Activated B cell treated with CpG ODN at 0.5 μM for 24 hours (primary cell): ENCODE measurements at regions of chr19 and their contacts with region 1.

Region 1: GRCh38 chr19:5292822-5293611 is 47.6 kb downstream of the PTPRS start:
- DNase-seq: peak; percentile 43
- ATAC-seq: peak; percentile 75
- H3K4me3 Mint-ChIP-seq: peak overlapping the region; percentile 75
- H3K27ac Mint-ChIP-seq: no peak overlapping the region
- H3K4me1 Mint-ChIP-seq: peaks cover 22% of the 10 kb centered on the region
- H3K27me3 Mint-ChIP-seq: peaks cover 18% of the 10 kb centered on the region
- CTCF ChIP-seq: no peak

Region 2: GRCh38 chr19:4976401-4977298 is 316.4 kb before region 1 on chr19:
- CTCF ChIA-PET with region 1: no interaction called
- POLR2A ChIA-PET with region 1: no interaction called
- intact Hi-C with region 1: no loop called
- DNase-seq: no peak
- ATAC-seq: peak; percentile 22
- H3K4me3 Mint-ChIP-seq: peak overlapping the region; percentile 57
- H3K27ac Mint-ChIP-seq: peak overlapping the region; percentile 41
- H3K4me1 Mint-ChIP-seq: peaks cover 60% of the 10 kb centered on the region
- H3K27me3 Mint-ChIP-seq: no peaks in the 10 kb centered on the region
- CTCF ChIP-seq: no peak

Region 3: DNA sequence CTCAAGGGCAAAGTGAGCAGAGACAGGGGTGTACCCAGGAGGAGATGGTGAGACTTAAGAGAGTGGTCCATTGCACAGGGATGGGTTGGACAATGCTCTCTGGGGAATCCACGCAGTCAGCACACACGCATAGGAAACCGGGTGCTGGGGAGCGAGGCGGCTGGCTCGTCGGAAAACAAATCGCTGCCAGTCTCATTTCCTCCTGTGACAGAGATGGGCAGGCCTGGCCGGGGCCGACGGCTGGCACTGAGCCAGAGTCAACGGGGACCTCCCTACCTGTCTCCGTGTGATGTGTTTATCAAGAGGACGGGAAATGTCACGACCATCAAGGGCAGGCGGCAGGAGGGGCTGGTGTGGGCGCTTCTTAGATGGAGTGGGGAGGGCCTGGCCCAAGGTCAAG is 20.3 kb after region 1 on chr19:
- CTCF ChIA-PET with region 1: no interaction called
- POLR2A ChIA-PET with region 1: no interaction called
- intact Hi-C with region 1: loop called (anchors 1 kb)
- DNase-seq: peak; percentile 48
- ATAC-seq: peak; percentile 89
- H3K4me3 Mint-ChIP-seq: no peak overlapping the region
- H3K27ac Mint-ChIP-seq: no peak overlapping the region
- H3K4me1 Mint-ChIP-seq: peaks cover 6% of the 10 kb centered on the region
- H3K27me3 Mint-ChIP-seq: no peaks in the 10 kb centered on the region
- CTCF ChIP-seq: no peak

Region 4: GRCh38 chr19:5340637-5341447 is 47.8 kb after region 1 on chr19 and contains the start of gene PTPRS:
- CTCF ChIA-PET with region 1: no interaction called
- POLR2A ChIA-PET with region 1: no interaction called
- intact Hi-C with region 1: loop called (anchors 5 kb)
- DNase-seq: peak; percentile 65
- ATAC-seq: peak; percentile 80
- H3K4me3 Mint-ChIP-seq: peak within 1 kb of the TSS; percentile 76
- H3K27ac Mint-ChIP-seq: no peak within 1 kb of the TSS
- H3K4me1 Mint-ChIP-seq: peaks cover 23% of the 10 kb centered on the region
- H3K27me3 Mint-ChIP-seq: peaks cover 39% of the 10 kb centered on the region
- CTCF ChIP-seq: no peak
- total RNA-seq, gene PTPRS: 2.5 and 3.4 TPM in 2 replicates